ENCODE measurements at regions of chr21 and their contacts with region 1.

Region 1: GRCh38 chr21:29298348-29299045 is at the start of gene BACH1:
- DNase-seq: peak; percentile 89 to 95 (median 95)
- H3K4me3 ChIP-seq: peak within 1 kb of the TSS; percentile 54 to 96 (median 83)
- H3K27ac ChIP-seq: peak within 1 kb of the TSS; percentile 76 to 79
- H3K4me1 ChIP-seq: peaks cover 23 to 37% (median 32%) of the 10 kb centered on the region in 4 experiments
- H3K27me3 ChIP-seq: no peaks in the 10 kb centered on the region

Region 2: GRCh38 chr21:29315131-29315749 is 16.7 kb after region 1 on chr21:
- CTCF ChIA-PET with region 1: interaction called, 16 read pairs
- POLR2A ChIA-PET with region 1: interaction called, 4 read pairs
- DNase-seq: no peak
- H3K4me3 ChIP-seq: no peak overlapping the region
- H3K27ac ChIP-seq: peak overlapping the region in 1 of 2 experiments; percentile 64
- H3K4me1 ChIP-seq: peaks cover 4 to 43% (median 25%) of the 10 kb centered on the region in 4 experiments
- H3K27me3 ChIP-seq: no peaks in the 10 kb centered on the region

Region 3: DNA sequence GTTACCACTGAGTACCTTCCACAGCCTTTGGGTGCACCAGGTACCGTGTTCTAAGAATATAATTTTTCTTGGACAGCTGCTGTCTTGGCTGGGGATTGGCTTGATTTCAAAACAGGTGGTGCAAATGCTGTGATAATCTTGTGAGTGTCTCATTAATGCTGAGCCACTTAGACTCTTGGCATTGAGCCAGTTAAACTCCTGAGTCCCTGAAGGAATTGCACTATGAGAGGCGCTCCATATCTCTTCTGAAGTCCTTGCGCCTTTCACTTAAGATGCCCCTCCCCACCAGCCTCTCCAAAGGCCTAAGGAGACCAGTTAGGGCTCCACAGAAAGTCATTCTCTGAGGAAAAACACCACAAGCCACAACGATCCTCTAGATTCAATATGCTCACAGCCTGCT is 51.2 kb after region 1 on chr21:
- CTCF ChIA-PET with region 1: interaction called, 10 read pairs
- POLR2A ChIA-PET with region 1: no interaction called
- DNase-seq: no peak
- H3K4me3 ChIP-seq: no peak overlapping the region
- H3K27ac ChIP-seq: no peak overlapping the region
- H3K4me1 ChIP-seq: peaks cover 4 to 20% (median 8%) of the 10 kb centered on the region in 4 experiments
- H3K27me3 ChIP-seq: no peaks in the 10 kb centered on the region